GM12878 (cell line): ENCODE measurements at regions of chr1 and their contacts with region 1.

Region 1: GRCh38 chr1:26111530-26112406 is at the start of gene PDIK1L:
- DNase-seq: peak; percentile 73
- ATAC-seq: peak; percentile 86
- H3K4me3 ChIP-seq: peak within 1 kb of the TSS; percentile 89
- H3K27ac ChIP-seq: peak within 1 kb of the TSS; percentile 85
- H3K4me1 ChIP-seq: peaks cover 12% of the 10 kb centered on the region
- H3K27me3 ChIP-seq: no peaks in the 10 kb centered on the region
- CTCF ChIP-seq: no peak
- EP300 ChIP-seq: 0 out of 4 replicates have a peak, but pooled peaks of 1 of the 2 experiments have one; percentile 5
- POLR2A ChIP-seq: peak; percentile 88
- RAD21 ChIP-seq: no peak
- polyA plus RNA-seq, gene PDIK1L: 4.0 to 9.5 TPM

Region 2: DNA sequence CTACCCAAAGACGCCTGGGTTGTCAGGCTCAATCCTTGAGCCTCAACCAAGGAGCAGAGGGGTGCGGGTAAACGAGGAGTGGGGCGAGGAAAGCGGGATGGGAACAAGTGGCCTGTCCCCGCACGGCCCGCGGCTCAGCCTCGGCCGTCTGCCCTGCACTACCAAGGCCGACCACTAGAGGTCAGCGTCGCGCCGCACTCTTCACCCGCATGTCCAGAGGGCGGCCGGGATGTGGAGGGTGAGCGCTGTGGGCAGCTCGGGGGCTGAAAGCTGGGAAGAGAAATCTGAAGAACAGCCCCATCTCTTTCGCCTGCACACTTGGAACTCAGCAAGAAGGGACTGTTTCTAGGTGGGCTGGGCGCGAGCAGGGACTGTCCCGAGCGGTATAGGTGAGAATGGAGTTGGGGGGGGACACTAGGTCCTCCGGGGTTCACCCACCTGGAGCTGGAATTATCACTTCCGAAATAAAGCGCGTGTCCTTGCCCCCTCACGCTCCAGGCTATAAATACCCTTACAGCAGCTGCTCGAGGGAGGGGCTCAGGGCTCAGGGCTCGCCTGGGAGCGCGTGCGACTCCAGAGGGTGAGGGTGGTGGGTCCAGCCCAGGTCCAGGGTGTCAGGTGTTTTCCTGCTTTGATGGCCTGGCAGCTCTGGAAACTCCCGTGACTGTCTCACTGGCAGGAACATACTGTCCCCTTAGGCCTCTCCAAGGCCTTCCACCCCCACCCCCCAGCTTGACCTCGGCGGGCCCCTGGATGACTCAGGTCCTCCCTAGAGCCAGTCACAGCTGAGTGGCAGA is 75.6 kb before region 1 on chr1:
- CTCF ChIA-PET with region 1: interaction called, 4 read pairs
- POLR2A ChIA-PET with region 1: no interaction called
- RAD21 ChIA-PET with region 1: no interaction called
- SMC1A ChIA-PET with region 1: interaction called, 3 read pairs
- in situ Hi-C with region 1: no loop called
- intact Hi-C with region 1: loop called (anchors 5 kb)
- DNase-seq: peak; percentile 13
- ATAC-seq: peak; percentile 93
- H3K4me3 ChIP-seq: peak overlapping the region; percentile 86
- H3K27ac ChIP-seq: no peak overlapping the region
- H3K4me1 ChIP-seq: peaks cover 10% of the 10 kb centered on the region; the same call in 1 of the 2 replicates
- H3K27me3 ChIP-seq: peaks cover 0 to 2% of the 10 kb centered on the region in 2 experiments
- CTCF ChIP-seq: peak; percentile 97 to 100 (median 97); a peak in 5 of 6 replicates
- EP300 ChIP-seq: no peak
- POLR2A ChIP-seq: no peak
- RAD21 ChIP-seq: peak; percentile 82

Region 3: GRCh38 chr1:26126321-26127084 is 14.7 kb after region 1 on chr1:
- CTCF ChIA-PET with region 1: interaction called, 22 read pairs
- POLR2A ChIA-PET with region 1: interaction called, 13 read pairs
- RAD21 ChIA-PET with region 1: interaction called, 19 read pairs
- SMC1A ChIA-PET with region 1: interaction called, 16 read pairs
- in situ Hi-C with region 1: no loop called
- intact Hi-C with region 1: no loop called
- DNase-seq: no peak
- ATAC-seq: peak; percentile 97
- H3K4me3 ChIP-seq: no peak overlapping the region
- H3K27ac ChIP-seq: peak overlapping the region; percentile 27; the same call in 1 of the 2 replicates
- H3K4me1 ChIP-seq: peaks cover 4% of the 10 kb centered on the region
- H3K27me3 ChIP-seq: no peaks in the 10 kb centered on the region
- CTCF ChIP-seq: no peak
- EP300 ChIP-seq: no peak
- POLR2A ChIP-seq: no peak
- RAD21 ChIP-seq: no peak

Region 4: GRCh38 chr1:26161415-26162219 is 49.8 kb after region 1 on chr1:
- CTCF ChIA-PET with region 1: no interaction called
- POLR2A ChIA-PET with region 1: interaction called, 3 read pairs
- RAD21 ChIA-PET with region 1: no interaction called
- SMC1A ChIA-PET with region 1: no interaction called
- in situ Hi-C with region 1: no loop called
- intact Hi-C with region 1: loop called (anchors 5 kb)
- DNase-seq: no peak
- ATAC-seq: peak; percentile 70
- H3K4me3 ChIP-seq: no peak overlapping the region
- H3K27ac ChIP-seq: no peak overlapping the region
- H3K4me1 ChIP-seq: peaks cover 4% of the 10 kb centered on the region
- H3K27me3 ChIP-seq: peaks cover 3 to 22% of the 10 kb centered on the region in 2 experiments
- CTCF ChIP-seq: peak in 1 of 3 experiments; percentile 12; a peak in 2 of 6 replicates
- EP300 ChIP-seq: no peak
- POLR2A ChIP-seq: no peak
- RAD21 ChIP-seq: no peak